ENCODE measurements at regions of chr10 and their contacts with region 1.

Region 1: DNA sequence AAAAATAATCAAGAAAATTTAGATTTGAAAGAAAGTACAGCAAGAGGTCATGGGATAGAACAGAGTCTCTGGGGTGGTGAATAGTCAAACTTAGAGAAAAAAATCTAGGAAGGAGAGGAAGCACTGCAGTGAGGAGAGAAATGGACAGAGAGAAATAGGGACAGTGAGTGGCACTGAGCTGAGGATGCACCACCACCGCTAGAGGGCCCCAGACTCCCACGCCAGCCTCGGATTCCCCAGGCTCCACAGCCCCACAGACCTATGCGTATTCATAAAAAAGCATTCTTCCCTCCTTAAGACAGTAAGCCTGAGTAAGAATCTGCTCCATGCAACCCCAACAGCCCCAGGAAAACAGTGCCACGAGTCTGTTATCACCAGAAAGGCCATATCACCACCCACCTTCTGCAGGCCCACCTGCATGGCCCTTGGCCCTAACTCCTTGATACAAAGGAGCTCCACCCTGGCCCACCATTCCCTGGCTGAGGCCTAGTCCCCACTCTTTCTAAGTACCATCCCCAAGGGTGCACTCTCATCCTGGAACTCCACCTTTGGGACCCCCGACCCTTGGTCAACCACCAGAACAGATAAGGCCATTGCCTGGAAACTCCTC is 91.0 kb downstream of the ALOX5 start:
- DNase-seq: peak in 1 of 2 experiments; percentile 86
- H3K4me3 ChIP-seq: no peak overlapping the region
- H3K27ac ChIP-seq: no peak overlapping the region
- H3K4me1 ChIP-seq: peaks cover 0 to 2% (median under 1%) of the 10 kb centered on the region in 4 experiments; a peak in 4 of 7 replicates
- H3K27me3 ChIP-seq: no peaks in the 10 kb centered on the region
- CTCF ChIP-seq: peak; percentile 90 to 99 (median 91)
- EP300 ChIP-seq: no peak
- POLR2A ChIP-seq: no peak
- RAD21 ChIP-seq: peak; percentile 95 to 99

Region 2: GRCh38 chr10:45235798-45236231 is 229.2 kb before region 1 on chr10:
- CTCF ChIA-PET with region 1: interaction called, 12 read pairs
- POLR2A ChIA-PET with region 1: no interaction called
- DNase-seq: no peak
- H3K4me3 ChIP-seq: no peak overlapping the region
- H3K27ac ChIP-seq: no peak overlapping the region
- H3K4me1 ChIP-seq: no peaks in the 10 kb centered on the region
- H3K27me3 ChIP-seq: peaks cover 0 to 1% (median 0%) of the 10 kb centered on the region in 4 experiments; a peak in 1 of 7 replicates
- CTCF ChIP-seq: no peak
- EP300 ChIP-seq: no peak
- POLR2A ChIP-seq: no peak
- RAD21 ChIP-seq: no peak

Region 3: GRCh38 chr10:45249978-45250693 is 214.9 kb before region 1 on chr10:
- CTCF ChIA-PET with region 1: interaction called, 23 read pairs
- POLR2A ChIA-PET with region 1: interaction called, 3 read pairs
- DNase-seq: peak in 1 of 2 experiments; percentile 64
- H3K4me3 ChIP-seq: peak overlapping the region; percentile 9 to 62 (median 32); a peak in 5 of 8 replicates
- H3K27ac ChIP-seq: no peak overlapping the region
- H3K4me1 ChIP-seq: no peaks in the 10 kb centered on the region
- H3K27me3 ChIP-seq: no peaks in the 10 kb centered on the region
- CTCF ChIP-seq: peak in 2 of 3 experiments; percentile 9 to 43; a peak in 2 of 4 replicates
- EP300 ChIP-seq: no peak
- POLR2A ChIP-seq: no peak
- RAD21 ChIP-seq: peak; percentile 58 to 68

Region 4: GRCh38 chr10:45433716-45434469 is 31.2 kb before region 1 on chr10:
- CTCF ChIA-PET with region 1: interaction called, 10 read pairs
- POLR2A ChIA-PET with region 1: no interaction called
- DNase-seq: peak in 1 of 2 experiments; percentile 41
- H3K4me3 ChIP-seq: no peak overlapping the region
- H3K27ac ChIP-seq: no peak overlapping the region
- H3K4me1 ChIP-seq: peaks cover 4 to 12% (median 5%) of the 10 kb centered on the region in 4 experiments
- H3K27me3 ChIP-seq: no peaks in the 10 kb centered on the region
- CTCF ChIP-seq: no peak
- EP300 ChIP-seq: no peak
- POLR2A ChIP-seq: no peak
- RAD21 ChIP-seq: no peak

Region 5: GRCh38 chr10:45453639-45454255 is 11.3 kb before region 1 on chr10:
- CTCF ChIA-PET with region 1: interaction called, 30 read pairs
- POLR2A ChIA-PET with region 1: interaction called, 3 read pairs
- DNase-seq: no peak
- H3K4me3 ChIP-seq: no peak overlapping the region
- H3K27ac ChIP-seq: no peak overlapping the region
- H3K4me1 ChIP-seq: 0 out of 7 replicates have a peak, but pooled peaks cover 0 to 2% (median 0%) of the 10 kb centered on the region in 4 experiments
- H3K27me3 ChIP-seq: no peaks in the 10 kb centered on the region
- CTCF ChIP-seq: no peak
- EP300 ChIP-seq: no peak
- POLR2A ChIP-seq: no peak
- RAD21 ChIP-seq: no peak

Region 6: DNA sequence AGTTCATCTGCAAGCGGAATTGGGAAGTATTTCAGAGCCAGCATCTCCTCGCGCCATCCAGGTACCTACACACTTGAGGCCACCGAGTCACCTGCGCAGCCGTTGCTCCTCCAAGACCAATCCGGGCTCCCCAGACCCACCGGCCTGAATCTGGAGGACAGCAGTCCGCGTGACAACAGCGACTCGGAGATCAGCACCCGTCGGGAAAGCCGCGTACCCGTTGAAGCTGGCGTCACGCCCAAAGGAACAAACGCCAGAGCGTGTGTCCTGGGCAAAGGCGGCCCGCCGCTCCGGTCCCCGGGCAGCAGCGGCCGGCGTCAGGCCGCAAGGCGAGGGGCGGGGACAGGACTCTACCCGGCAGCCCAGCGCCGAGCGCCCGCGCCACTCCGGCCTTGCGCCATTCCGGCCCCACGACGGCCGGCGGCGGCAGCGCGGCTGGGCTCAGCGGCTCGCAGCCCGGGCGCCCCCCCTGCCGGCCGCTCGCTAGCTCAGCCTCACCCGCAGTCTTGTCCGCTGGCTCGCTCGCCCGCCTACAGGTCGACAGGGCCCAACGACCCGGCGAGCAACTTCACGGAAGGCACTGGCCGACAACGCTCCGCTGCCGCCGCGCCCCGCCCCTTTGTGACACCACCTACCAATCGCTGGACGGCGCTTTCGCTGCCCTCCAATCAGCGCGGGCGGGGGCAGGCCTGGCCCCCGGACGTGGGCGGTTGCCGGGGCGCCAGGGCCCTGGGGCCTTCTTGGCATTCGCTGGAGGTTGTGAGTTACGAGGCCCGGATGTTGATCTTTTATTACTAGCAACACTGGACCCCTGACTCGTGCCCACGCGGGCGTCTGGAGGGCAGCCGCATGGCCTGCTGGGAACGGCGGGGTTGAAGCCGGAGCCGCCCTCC is 207.4 kb after region 1 on chr10 and contains the start of gene ZFAND4:
- CTCF ChIA-PET with region 1: interaction called, 10 read pairs
- POLR2A ChIA-PET with region 1: interaction called, 3 read pairs
- DNase-seq: peak; percentile 93 to 97
- H3K4me3 ChIP-seq: peak within 1 kb of the TSS; percentile 67 to 98 (median 95)
- H3K27ac ChIP-seq: peak within 1 kb of the TSS; percentile 83
- H3K4me1 ChIP-seq: peaks cover 0 to 5% (median 3%) of the 10 kb centered on the region in 4 experiments; a peak in 5 of 7 replicates
- H3K27me3 ChIP-seq: no peaks in the 10 kb centered on the region
- CTCF ChIP-seq: peak; percentile 74 to 88 (median 74)
- EP300 ChIP-seq: no peak
- POLR2A ChIP-seq: peak in 1 of 2 experiments; percentile 78; a peak in 2 of 3 replicates
- RAD21 ChIP-seq: peak; percentile 44 to 72
- total RNA-seq, gene ZFAND4: 16.0 and 17.8 TPM in 2 replicates